AG04449 (cell line): ENCODE measurements at regions of chr13 and their contacts with region 1.

Region 1: DNA sequence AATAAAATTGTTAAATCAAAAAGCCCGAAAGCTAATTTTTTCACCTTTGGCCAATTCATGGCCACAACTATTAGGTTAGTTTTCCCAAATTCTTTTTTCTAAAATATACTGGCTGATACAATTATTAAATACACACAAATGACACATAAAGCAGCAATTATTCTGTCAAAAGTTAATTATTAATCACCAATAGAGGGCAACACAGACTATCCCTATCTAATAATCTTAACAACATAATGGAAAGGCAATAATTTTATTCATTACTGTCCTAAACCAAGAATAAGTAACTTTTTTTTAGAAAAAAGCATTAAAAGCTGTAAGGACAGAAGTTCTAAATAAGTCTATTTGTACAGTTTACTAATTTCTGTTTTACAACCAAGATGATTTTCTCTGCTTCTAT is 51.7 kb downstream of the KATNAL1 start:
- DNase-seq: no peak
- H3K4me3 ChIP-seq: no peak overlapping the region
- CTCF ChIP-seq: no peak

Region 2: GRCh38 chr13:30465585-30466357 is 210.1 kb after region 1 on chr13 and contains the start of gene HMGB1:
- CTCF ChIA-PET with region 1: interaction called, 11 read pairs
- POLR2A ChIA-PET with region 1: no interaction called
- DNase-seq: peak; percentile 92
- H3K4me3 ChIP-seq: peak within 1 kb of the TSS; percentile 68
- CTCF ChIP-seq: no peak

Region 3: GRCh38 chr13:30486230-30487074 is 230.8 kb after region 1 on chr13:
- CTCF ChIA-PET with region 1: no interaction called
- POLR2A ChIA-PET with region 1: no interaction called
- DNase-seq: no peak
- H3K4me3 ChIP-seq: no peak overlapping the region
- CTCF ChIP-seq: no peak